Adrenal gland (tissue), 19 donors: ENCODE measurements at regions of chr5 and their contacts with region 1.

Region 1: GRCh38 chr5:173890195-173890991 is 2.2 kb downstream of the CPEB4 start:
- DNase-seq: peak; percentile 70 to 85 (median 76)
- H3K4me3 ChIP-seq: peak overlapping the region in 3 of 4 donors; percentile 80 to 94 (median 94)
- H3K27ac ChIP-seq: peak overlapping the region; percentile 93 to 98 (median 97)
- H3K4me1 ChIP-seq: peaks cover 0 to 20% of the 10 kb centered on the region in 2 donors
- H3K27me3 ChIP-seq: no peaks in the 10 kb centered on the region
- CTCF ChIP-seq: no peak
- POLR2A ChIP-seq: peak; percentile 29 to 69

Region 2: DNA sequence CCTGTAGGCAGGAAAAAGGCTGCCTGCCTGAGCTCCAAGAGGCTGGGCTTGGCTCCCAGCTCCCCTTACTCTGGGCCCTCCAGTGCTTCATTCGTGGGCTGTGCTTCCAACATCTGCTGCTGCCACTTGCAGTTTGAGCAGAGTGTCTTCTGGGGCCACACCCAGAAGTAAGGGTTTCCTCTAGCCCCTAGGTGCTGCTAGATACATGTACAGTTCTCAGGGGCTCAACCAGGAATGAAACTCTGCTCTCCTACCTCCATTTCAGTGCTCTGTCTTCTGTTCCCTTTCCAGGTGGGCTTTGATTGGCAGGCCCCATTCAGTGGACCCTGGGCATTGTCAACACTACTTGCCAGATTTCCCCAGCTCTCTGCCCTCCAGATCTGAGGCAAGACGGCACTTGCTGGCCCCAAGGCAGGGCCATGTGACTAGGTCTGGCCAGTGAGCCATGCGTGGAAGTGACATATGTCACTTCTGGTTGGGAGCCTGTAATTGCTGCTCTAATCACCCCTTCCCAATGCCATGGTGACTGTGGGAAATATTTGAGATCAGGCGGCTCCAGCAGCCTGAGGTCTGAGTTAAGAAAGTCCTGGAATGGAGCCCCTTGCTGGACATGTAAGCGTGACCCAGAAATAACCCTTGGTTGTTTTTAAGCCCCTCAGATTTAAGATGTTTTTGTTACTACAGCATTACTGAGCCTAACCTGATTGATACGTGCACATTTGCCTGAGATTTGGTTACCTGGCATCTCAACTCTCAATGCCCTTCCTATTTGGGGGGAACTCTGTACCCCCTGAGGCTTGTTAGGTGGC is 264.5 kb before region 1 on chr5:
- intact Hi-C with region 1: loop called in 1 of 2 experiments (anchors 10 kb)
- DNase-seq: no peak
- H3K4me3 ChIP-seq: no peak overlapping the region
- H3K27ac ChIP-seq: no peak overlapping the region
- H3K4me1 ChIP-seq: peaks cover 0 to 4% of the 10 kb centered on the region in 2 donors
- H3K27me3 ChIP-seq: no peaks in the 10 kb centered on the region
- CTCF ChIP-seq: no peak
- POLR2A ChIP-seq: no peak

Region 3: DNA sequence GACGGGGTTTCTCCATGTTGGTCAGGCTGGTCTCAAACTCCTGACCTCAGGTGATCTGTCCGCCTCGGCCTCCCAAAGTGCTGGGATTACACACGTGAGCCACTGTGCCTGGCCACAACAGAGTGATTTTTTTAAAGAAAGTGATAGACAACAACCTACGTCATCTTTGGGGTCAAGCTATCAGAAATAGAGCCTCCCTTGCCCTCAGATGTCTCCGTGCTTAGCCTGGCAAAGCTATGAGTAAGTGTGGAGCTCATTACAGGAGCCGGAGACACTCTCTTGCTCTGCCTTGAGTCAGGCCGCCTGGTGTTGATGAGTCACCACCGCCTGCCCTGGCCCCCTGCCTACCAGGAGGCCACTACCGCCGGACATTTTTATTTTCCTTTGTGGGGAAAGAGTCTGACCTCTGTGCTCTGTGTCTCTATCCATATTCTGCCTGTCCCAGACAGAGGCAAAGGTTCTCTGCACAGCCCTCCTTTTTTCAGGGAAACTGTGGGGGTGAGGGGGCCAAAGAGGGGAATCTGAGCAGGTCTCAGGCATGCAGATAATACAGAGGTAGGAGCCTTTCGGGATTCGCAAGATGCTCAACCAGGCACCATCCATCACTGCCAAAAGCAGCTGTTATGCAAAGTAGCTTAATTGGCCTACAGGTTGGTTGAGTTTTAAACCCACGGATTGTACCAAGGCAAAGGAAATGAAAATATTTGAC is 125.9 kb before region 1 on chr5:
- intact Hi-C with region 1: loop called in 1 of 2 experiments (anchors 5 kb)
- DNase-seq: peak; percentile 93 to 98 (median 97)
- H3K4me3 ChIP-seq: no peak overlapping the region
- H3K27ac ChIP-seq: peak overlapping the region; percentile 61 to 96 (median 80)
- H3K4me1 ChIP-seq: peaks cover 12 to 57% of the 10 kb centered on the region in 2 donors
- H3K27me3 ChIP-seq: no peaks in the 10 kb centered on the region
- CTCF ChIP-seq: peak in 2 of 6 experiments; percentile 8 to 22
- POLR2A ChIP-seq: peak in 1 of 2 donors; percentile 70